ENCODE measurements at regions of chr6 and their contacts with region 1.

Region 1: DNA sequence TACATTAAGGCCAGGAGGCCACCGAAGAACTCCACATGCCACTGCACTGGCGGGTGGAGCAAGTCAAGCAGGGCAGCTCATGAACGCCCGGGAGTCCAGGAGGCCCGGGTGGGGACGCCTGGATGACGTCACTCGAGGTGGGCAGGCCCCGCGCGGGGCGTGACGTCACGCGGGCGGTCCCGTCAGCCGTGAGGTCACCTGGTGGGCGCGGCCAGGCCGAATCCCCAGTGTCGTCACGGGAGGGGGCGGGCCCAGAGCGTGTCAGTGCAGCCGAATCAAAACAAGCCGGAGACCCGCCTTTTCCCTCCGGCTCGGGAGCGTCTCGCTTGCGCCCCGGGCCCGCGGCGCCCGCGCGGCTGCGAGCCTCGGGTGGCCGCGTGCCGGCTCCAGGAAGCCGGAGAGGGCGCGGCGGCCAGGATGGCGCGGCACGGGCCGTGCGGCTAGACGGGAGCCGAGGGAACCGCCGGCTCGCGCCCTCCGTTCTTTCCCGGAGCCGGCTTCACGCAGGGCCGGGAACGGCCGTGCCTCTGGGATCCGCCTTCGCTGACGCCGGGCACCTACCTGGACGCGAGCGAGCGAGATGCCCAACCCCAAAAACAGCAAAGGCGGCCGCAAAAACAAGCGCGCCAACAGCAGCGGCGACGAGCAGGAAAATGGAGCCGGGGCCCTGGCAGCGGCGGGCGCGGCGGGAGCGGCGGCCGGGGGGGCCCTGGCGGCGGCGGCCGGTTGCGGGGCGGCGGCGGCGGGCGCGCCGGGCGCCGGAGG is at the start of gene HECA:
- DNase-seq: peak; percentile 99
- H3K4me3 Mint-ChIP-seq: peak within 1 kb of the TSS; percentile 83
- H3K27ac Mint-ChIP-seq: peak within 1 kb of the TSS; percentile 94
- H3K4me1 Mint-ChIP-seq: peaks cover 54% of the 10 kb centered on the region
- H3K27me3 Mint-ChIP-seq: no peaks in the 10 kb centered on the region
- total RNA-seq, gene HECA: 75.7 to 76.6 TPM

Region 2: GRCh38 chr6:139028658-139029469 is 106.1 kb before region 1 on chr6 and contains the start of gene ABRACL:
- CTCF ChIA-PET with region 1: interaction called, 3 read pairs
- POLR2A ChIA-PET with region 1: no interaction called
- intact Hi-C with region 1: loop called (anchors 2 kb)
- DNase-seq: peak; percentile 91
- H3K4me3 Mint-ChIP-seq: no peak within 1 kb of the TSS
- H3K27ac Mint-ChIP-seq: no peak within 1 kb of the TSS
- H3K4me1 Mint-ChIP-seq: peaks cover 20% of the 10 kb centered on the region
- H3K27me3 Mint-ChIP-seq: no peaks in the 10 kb centered on the region
- total RNA-seq, gene ABRACL: 179 to 182 TPM

Region 3: DNA sequence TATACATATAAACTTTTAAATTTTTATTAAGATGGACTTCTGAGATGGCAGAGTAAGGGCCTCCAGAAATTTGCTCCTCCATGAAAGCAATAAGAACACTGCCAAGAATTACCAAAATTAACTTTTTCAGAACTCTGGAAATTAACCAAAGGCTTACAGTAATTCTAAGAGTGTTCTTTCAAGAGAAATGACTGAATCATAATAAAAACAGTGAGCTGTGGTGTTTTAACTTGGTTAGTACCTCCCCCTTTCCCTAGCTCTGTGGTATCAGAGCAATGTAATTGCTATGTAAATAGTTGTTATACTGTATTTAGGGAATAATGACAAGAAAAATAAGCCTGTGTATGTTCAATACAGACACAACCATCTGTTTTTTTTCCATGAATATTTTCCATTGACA is 18.9 kb after region 1 on chr6:
- CTCF ChIA-PET with region 1: interaction called, 8 read pairs
- POLR2A ChIA-PET with region 1: interaction called, 128 read pairs
- intact Hi-C with region 1: loop called (anchors 2 kb)
- DNase-seq: no peak
- H3K4me3 Mint-ChIP-seq: peak overlapping the region; percentile 37
- H3K27ac Mint-ChIP-seq: peak overlapping the region; percentile 98
- H3K4me1 Mint-ChIP-seq: peaks cover 85% of the 10 kb centered on the region
- H3K27me3 Mint-ChIP-seq: no peaks in the 10 kb centered on the region

Region 4: DNA sequence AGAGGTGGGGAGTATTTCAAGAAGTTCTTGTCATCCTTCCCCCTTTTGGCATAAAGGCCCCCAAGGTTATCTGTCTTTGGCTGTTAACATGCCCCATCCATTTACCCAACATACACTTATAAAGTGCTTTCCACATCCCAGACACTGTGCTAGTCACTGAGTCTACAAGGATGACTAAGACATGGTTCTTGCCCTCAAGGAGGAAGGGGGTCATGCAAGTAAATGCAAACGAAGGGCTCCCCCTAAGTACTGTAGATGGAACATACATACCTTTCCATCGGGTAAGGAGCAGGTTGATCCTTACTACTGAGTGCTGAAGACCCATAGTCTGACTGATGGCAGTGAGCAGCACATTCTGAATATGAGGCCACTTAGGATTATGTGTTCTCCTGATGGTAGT is 38.2 kb after region 1 on chr6:
- CTCF ChIA-PET with region 1: interaction called, 5 read pairs
- POLR2A ChIA-PET with region 1: interaction called, 4 read pairs
- intact Hi-C with region 1: loop called (anchors 1 kb)
- DNase-seq: no peak
- H3K4me3 Mint-ChIP-seq: no peak overlapping the region
- H3K27ac Mint-ChIP-seq: peak overlapping the region; percentile 78
- H3K4me1 Mint-ChIP-seq: peaks cover 90% of the 10 kb centered on the region
- H3K27me3 Mint-ChIP-seq: no peaks in the 10 kb centered on the region

Region 5: GRCh38 chr6:139448051-139448649 is 313.2 kb after region 1 on chr6:
- CTCF ChIA-PET with region 1: no interaction called
- POLR2A ChIA-PET with region 1: no interaction called
- intact Hi-C with region 1: no loop called
- DNase-seq: no peak
- H3K4me3 Mint-ChIP-seq: no peak overlapping the region
- H3K27ac Mint-ChIP-seq: no peak overlapping the region
- H3K4me1 Mint-ChIP-seq: peaks cover 2% of the 10 kb centered on the region
- H3K27me3 Mint-ChIP-seq: peaks cover 2% of the 10 kb centered on the region

Region 6: DNA sequence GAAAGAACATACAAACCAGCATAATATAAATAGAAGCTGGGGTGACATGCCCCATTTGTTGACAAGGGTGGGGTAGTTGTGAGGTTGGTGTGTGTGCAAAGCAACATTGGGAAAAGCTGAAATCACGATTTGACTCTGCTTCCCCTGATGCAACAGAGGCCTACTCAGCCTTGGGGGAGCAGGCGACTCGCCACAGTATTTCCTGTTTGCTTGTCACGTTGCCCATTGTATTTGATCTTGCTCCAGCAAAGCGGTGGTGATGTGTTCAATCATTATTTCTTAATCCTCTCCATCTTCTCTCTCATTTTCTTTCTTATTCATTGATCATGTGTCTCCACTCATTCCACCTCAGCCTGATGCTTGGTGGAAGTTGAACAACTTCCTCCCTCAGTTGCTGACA is 405.3 kb after region 1 on chr6:
- CTCF ChIA-PET with region 1: no interaction called
- POLR2A ChIA-PET with region 1: no interaction called
- intact Hi-C with region 1: loop called (anchors 10 kb)
- DNase-seq: peak; percentile 82
- H3K4me3 Mint-ChIP-seq: peak overlapping the region; percentile 38
- H3K27ac Mint-ChIP-seq: peak overlapping the region; percentile 84
- H3K4me1 Mint-ChIP-seq: peaks cover 44% of the 10 kb centered on the region
- H3K27me3 Mint-ChIP-seq: no peaks in the 10 kb centered on the region

Measured in activated CD4-positive, alpha-beta memory T cell treated with anti-CD3 and anti-CD28 coated beads for 36 hours (primary cell).